IMR-90 (cell line): ENCODE measurements at regions of chr11 and their contacts with region 1.

Region 1: DNA sequence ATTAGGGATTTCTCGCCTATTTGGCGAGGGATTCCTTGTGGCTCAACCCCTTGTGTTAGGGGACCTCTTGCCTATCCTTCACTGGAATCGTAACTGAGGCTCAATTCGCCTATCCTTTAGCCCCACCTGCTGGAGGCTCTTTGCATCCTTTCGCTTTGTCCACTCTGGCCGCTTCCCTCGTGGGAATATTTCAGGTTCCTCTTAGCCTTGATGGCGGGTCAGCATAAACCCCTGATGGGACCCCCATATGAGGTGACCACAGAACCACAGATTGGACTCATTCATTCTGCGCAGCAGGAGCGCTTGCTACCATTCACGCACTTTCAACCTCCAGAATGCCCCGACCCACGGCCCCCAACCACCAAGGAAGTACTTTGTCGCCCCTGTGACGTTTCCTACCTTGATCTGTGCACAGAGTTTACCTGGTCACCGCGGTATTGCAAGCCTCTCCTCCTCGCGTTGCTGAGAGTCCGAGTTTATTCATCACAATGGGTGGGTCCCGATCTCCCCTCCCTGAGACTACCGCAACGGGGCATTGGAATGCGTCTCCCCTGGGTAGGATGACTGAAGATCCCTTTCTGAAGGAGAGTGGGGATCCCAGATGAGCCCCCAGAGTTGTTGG is at the start of gene OR52N2:
- DNase-seq: peak; percentile 65
- ATAC-seq: peak; percentile 99
- H3K4me3 ChIP-seq: peak within 1 kb of the TSS; percentile 45
- H3K27ac ChIP-seq: no peak within 1 kb of the TSS
- H3K4me1 ChIP-seq: no peaks in the 10 kb centered on the region
- H3K27me3 ChIP-seq: peaks cover 7% of the 10 kb centered on the region
- CTCF ChIP-seq: peak; percentile 89
- POLR2A ChIP-seq: no peak
- RAD21 ChIP-seq: peak; percentile 95
- total RNA-seq, gene OR52N2: not detected in 2 replicates

Region 2: GRCh38 chr11:5123802-5124521 is 684.6 kb before region 1 on chr11:
- CTCF ChIA-PET with region 1: no interaction called
- POLR2A ChIA-PET with region 1: no interaction called
- dilution Hi-C with region 1: no loop called
- in situ Hi-C with region 1: no loop called
- intact Hi-C with region 1: loop called (anchors 1 kb)
- DNase-seq: peak; percentile 76
- ATAC-seq: peak; percentile 100
- H3K4me3 ChIP-seq: no peak overlapping the region
- H3K27ac ChIP-seq: no peak overlapping the region
- H3K4me1 ChIP-seq: no peaks in the 10 kb centered on the region
- H3K27me3 ChIP-seq: no peaks in the 10 kb centered on the region
- CTCF ChIP-seq: peak; percentile 94
- POLR2A ChIP-seq: no peak
- RAD21 ChIP-seq: peak; percentile 91

Region 3: DNA sequence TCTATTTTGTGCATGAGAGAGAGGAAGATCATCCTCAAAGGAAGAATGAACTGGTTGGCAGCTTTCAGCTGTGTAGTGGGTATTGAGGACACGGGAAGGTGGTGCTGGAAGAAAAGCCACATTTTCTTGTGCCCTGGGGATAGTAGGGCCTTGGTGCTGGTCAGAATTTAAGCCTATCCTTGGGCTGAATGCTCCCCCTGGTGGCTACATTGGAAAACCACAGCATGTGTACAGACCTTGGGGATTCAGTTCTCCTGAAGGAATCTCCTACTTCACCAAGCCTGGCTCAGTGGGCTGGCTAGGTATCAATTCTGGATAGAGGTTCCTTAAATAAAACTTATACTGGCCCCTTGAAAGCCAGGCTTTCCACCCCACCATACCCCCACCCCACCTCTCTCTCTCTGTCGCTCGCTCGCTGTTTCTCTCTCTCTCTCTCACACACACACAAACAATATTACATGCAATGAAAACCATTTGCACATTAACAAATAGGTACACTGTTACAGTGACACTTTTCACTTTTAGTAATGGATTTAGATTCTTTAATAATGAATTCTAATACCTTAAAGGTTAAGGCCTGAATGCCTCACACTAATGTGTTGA is 427.8 kb before region 1 on chr11:
- CTCF ChIA-PET with region 1: no interaction called
- POLR2A ChIA-PET with region 1: no interaction called
- dilution Hi-C with region 1: no loop called
- in situ Hi-C with region 1: no loop called
- intact Hi-C with region 1: loop called (anchors 2 kb)
- DNase-seq: peak; percentile 77
- ATAC-seq: peak; percentile 100
- H3K4me3 ChIP-seq: no peak overlapping the region
- H3K27ac ChIP-seq: no peak overlapping the region
- H3K4me1 ChIP-seq: no peaks in the 10 kb centered on the region
- H3K27me3 ChIP-seq: no peaks in the 10 kb centered on the region
- CTCF ChIP-seq: peak; percentile 89
- POLR2A ChIP-seq: 0 out of 2 replicates have a peak, but pooled peaks have one; percentile 34
- RAD21 ChIP-seq: peak; percentile 98

Region 4: GRCh38 chr11:5581014-5581413 is 227.6 kb before region 1 on chr11:
- CTCF ChIA-PET with region 1: no interaction called
- POLR2A ChIA-PET with region 1: no interaction called
- dilution Hi-C with region 1: no loop called
- in situ Hi-C with region 1: no loop called
- intact Hi-C with region 1: no loop called
- DNase-seq: no peak
- ATAC-seq: no peak
- H3K4me3 ChIP-seq: no peak overlapping the region
- H3K27ac ChIP-seq: no peak overlapping the region
- H3K4me1 ChIP-seq: no peaks in the 10 kb centered on the region
- H3K27me3 ChIP-seq: no peaks in the 10 kb centered on the region; the same call in 1 of the 2 replicates
- CTCF ChIP-seq: no peak
- POLR2A ChIP-seq: no peak
- RAD21 ChIP-seq: no peak

Region 5: GRCh38 chr11:5600374-5600851 is 208.2 kb before region 1 on chr11:
- CTCF ChIA-PET with region 1: no interaction called
- POLR2A ChIA-PET with region 1: no interaction called
- dilution Hi-C with region 1: no loop called
- in situ Hi-C with region 1: no loop called
- intact Hi-C with region 1: loop called (anchors 1 kb)
- DNase-seq: peak; percentile 90
- ATAC-seq: peak; percentile 75
- H3K4me3 ChIP-seq: no peak overlapping the region
- H3K27ac ChIP-seq: no peak overlapping the region; the same call in 1 of the 2 replicates
- H3K4me1 ChIP-seq: peaks cover 8% of the 10 kb centered on the region
- H3K27me3 ChIP-seq: no peaks in the 10 kb centered on the region
- CTCF ChIP-seq: peak; percentile 98
- POLR2A ChIP-seq: no peak
- RAD21 ChIP-seq: peak; percentile 79

Region 6: DNA sequence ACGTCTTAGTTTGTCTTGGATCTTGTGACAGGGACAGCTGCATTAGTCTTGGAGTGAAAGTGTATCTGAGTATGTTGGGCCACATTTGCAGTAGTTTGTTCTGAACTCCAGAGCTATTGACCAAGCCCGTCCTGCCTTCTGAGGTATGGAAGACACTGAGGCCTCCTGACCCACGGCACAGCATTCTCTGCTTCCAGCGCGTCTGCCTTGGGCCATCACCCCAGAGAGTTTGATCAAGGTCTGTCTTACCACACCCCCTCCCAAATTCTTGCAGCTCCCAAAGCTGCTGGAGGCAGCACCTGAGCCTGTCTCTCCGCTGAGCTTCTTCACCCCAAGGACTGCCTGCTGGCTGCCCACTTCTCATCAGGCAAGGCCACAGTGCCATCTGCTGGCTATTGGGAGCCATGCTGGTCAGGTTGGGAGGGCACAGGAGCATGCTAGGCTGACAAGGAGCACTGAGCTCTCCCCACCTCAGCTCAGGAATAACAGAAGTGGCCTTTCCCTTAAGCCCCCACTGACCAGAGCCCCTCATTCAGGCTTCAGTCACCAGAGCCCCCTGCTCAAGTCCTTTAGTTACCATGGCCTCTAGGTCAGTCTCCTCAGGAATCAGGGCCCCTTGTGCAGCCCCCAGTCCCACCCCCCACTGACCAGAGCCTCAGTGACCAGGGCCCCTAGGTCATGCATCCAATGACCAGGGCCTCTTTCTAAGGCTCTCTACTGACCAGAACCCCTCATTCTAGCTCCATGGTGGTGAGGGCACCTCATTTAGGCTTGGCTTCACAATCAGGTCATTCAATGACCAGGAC is 554.5 kb after region 1 on chr11:
- CTCF ChIA-PET with region 1: no interaction called
- POLR2A ChIA-PET with region 1: no interaction called
- dilution Hi-C with region 1: no loop called
- in situ Hi-C with region 1: no loop called
- intact Hi-C with region 1: loop called (anchors 5 kb)
- DNase-seq: peak; percentile 77
- ATAC-seq: peak; percentile 99
- H3K4me3 ChIP-seq: no peak overlapping the region
- H3K27ac ChIP-seq: no peak overlapping the region
- H3K4me1 ChIP-seq: 0 out of 2 replicates have a peak, but pooled peaks cover 2% of the 10 kb centered on the region
- H3K27me3 ChIP-seq: peaks cover 3% of the 10 kb centered on the region
- CTCF ChIP-seq: peak; percentile 96
- POLR2A ChIP-seq: no peak
- RAD21 ChIP-seq: peak; percentile 93

Region 7: DNA sequence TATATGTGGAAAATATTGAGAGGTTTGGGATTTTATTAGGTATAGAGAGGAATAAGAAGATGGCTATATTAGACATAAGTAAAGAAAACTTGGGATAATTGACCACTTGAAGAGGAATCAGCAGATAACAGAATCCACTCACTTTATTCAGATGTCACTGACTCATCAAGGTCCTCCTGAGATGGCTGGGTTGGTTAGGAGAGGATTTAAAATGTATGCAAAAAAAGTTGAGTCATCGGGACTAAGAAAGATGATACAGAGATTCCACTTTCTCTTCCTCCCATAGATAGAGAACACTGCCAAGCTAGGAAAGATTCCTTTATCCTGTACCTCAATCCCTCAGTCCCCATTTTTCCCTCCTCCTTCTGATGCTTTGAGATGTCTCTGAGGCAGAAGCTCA is 990.8 kb after region 1 on chr11 and contains the start of gene OR6A2:
- CTCF ChIA-PET with region 1: no interaction called
- POLR2A ChIA-PET with region 1: no interaction called
- dilution Hi-C with region 1: no loop called
- in situ Hi-C with region 1: no loop called
- intact Hi-C with region 1: no loop called
- DNase-seq: peak; percentile 47
- ATAC-seq: no peak
- H3K4me3 ChIP-seq: no peak within 1 kb of the TSS
- H3K27ac ChIP-seq: no peak within 1 kb of the TSS
- H3K4me1 ChIP-seq: no peaks in the 10 kb centered on the region
- H3K27me3 ChIP-seq: no peaks in the 10 kb centered on the region
- CTCF ChIP-seq: no peak
- POLR2A ChIP-seq: no peak
- RAD21 ChIP-seq: no peak
- total RNA-seq, gene OR6A2: 0.56 and 0.72 TPM in 2 replicates